CD14-positive monocyte (primary cell): ENCODE measurements at regions of chrX and their contacts with region 1.

Region 1: DNA sequence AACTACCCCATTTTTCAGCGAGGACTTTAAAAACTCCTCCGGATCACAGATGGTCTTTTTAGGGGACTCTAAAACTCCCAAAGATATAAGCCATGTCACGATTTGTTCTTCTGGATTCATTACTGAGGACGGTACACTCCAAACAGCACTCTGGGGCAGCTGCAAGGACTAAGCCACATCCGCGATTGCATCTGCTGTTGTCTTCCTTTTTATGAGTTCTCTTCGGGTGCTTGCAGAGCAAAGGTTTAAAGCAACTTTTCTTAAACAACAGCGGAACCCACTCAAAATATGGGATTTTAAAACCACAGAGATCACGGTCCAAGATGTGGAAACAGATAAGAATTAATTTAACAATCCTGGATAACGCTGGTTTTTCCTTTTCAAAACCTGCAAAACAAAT is at the start of gene ARHGEF6:
- DNase-seq: peak in 2 of 3 donors; percentile 14 to 21
- H3K4me3 ChIP-seq: peak within 1 kb of the TSS; percentile 43 to 88 (median 75)
- H3K4me3 Mint-ChIP-seq: peak within 1 kb of the TSS; percentile 78 to 94
- H3K27ac ChIP-seq: peak within 1 kb of the TSS; percentile 50 to 81
- H3K27ac Mint-ChIP-seq: peak within 1 kb of the TSS; percentile 80 to 95 (median 88)
- H3K4me1 ChIP-seq: peaks cover 45 to 59% of the 10 kb centered on the region in 2 donors
- H3K4me1 Mint-ChIP-seq: peaks cover 56% of the 10 kb centered on the region
- H3K27me3 ChIP-seq: no peaks in the 10 kb centered on the region
- H3K27me3 Mint-ChIP-seq: no peaks in the 10 kb centered on the region
- CTCF ChIP-seq: no peak
- polyA plus RNA-seq, gene ARHGEF6: 51.4 to 79.2 (median 57.0) TPM

Region 2: DNA sequence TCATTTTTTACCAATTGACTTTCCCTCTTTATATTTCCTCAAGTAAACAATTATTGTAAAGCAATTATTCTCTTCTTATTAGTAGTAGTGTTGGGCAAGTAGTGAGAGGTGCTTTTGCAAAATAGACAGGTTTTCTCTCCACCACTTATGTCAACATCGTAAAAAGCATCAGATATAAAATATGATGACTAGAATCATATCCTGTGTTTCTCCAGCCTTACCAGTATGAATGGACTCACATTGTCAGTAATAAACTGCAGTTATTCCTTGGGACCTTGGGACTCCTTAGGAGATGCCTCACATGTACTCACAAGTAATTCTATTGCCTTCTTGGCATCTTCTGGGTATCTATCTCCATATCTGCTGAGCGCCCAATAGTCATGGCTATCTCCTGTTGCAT is 333.5 kb before region 1 on chrX:
- intact Hi-C with region 1: no loop called
- DNase-seq: no peak
- H3K4me3 ChIP-seq: no peak overlapping the region
- H3K4me3 Mint-ChIP-seq: no peak overlapping the region
- H3K27ac ChIP-seq: no peak overlapping the region
- H3K27ac Mint-ChIP-seq: no peak overlapping the region
- H3K4me1 ChIP-seq: no peaks in the 10 kb centered on the region
- H3K4me1 Mint-ChIP-seq: no peaks in the 10 kb centered on the region
- H3K27me3 ChIP-seq: no peaks in the 10 kb centered on the region
- H3K27me3 Mint-ChIP-seq: no peaks in the 10 kb centered on the region
- CTCF ChIP-seq: no peak

Region 3: DNA sequence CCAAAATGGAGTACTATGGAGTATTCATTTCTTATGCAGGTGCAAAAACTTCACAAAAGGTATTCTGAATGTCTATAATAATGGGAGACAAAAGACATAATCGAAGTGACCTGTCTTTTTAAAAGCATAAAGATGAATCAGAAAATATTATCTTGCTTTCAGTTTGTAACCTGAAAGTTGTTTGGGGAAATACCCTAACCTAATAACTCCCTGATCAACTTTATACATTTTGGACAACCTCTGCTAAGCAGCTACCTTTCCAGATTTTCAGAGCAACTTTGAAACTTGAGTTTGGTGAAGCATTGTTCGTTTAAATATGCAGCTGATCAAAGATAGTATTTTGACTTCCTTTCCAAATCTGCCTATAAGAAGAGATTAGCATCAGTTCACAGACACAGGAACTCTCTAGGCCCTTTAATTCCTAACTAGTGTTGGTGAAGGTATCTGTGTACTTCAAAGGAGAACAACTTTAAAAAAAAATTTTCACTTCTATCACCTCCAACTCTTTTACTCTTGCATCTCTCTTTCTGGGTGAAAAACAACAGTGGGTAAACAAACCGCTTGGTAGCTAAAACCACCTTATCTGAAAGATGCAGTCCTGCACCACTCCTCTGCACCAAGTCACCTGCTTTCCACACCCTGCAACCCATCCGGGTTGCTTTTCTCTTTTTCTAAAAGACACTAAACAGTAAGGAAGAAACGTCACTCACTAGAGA is 106.3 kb before region 1 on chrX:
- intact Hi-C with region 1: no loop called
- DNase-seq: no peak
- H3K4me3 ChIP-seq: no peak overlapping the region
- H3K4me3 Mint-ChIP-seq: no peak overlapping the region
- H3K27ac ChIP-seq: no peak overlapping the region
- H3K27ac Mint-ChIP-seq: no peak overlapping the region
- H3K4me1 ChIP-seq: no peaks in the 10 kb centered on the region
- H3K4me1 Mint-ChIP-seq: no peaks in the 10 kb centered on the region
- H3K27me3 ChIP-seq: no peaks in the 10 kb centered on the region
- H3K27me3 Mint-ChIP-seq: no peaks in the 10 kb centered on the region
- CTCF ChIP-seq: no peak

Region 4: GRCh38 chrX:136725446-136726104 is 55.2 kb before region 1 on chrX:
- intact Hi-C with region 1: no loop called
- DNase-seq: no peak
- H3K4me3 ChIP-seq: no peak overlapping the region
- H3K4me3 Mint-ChIP-seq: no peak overlapping the region
- H3K27ac ChIP-seq: no peak overlapping the region
- H3K27ac Mint-ChIP-seq: no peak overlapping the region
- H3K4me1 ChIP-seq: peaks cover 0 to 4% of the 10 kb centered on the region in 2 donors
- H3K4me1 Mint-ChIP-seq: peaks cover 4% of the 10 kb centered on the region
- H3K27me3 ChIP-seq: no peaks in the 10 kb centered on the region
- H3K27me3 Mint-ChIP-seq: no peaks in the 10 kb centered on the region
- CTCF ChIP-seq: no peak

Region 5: DNA sequence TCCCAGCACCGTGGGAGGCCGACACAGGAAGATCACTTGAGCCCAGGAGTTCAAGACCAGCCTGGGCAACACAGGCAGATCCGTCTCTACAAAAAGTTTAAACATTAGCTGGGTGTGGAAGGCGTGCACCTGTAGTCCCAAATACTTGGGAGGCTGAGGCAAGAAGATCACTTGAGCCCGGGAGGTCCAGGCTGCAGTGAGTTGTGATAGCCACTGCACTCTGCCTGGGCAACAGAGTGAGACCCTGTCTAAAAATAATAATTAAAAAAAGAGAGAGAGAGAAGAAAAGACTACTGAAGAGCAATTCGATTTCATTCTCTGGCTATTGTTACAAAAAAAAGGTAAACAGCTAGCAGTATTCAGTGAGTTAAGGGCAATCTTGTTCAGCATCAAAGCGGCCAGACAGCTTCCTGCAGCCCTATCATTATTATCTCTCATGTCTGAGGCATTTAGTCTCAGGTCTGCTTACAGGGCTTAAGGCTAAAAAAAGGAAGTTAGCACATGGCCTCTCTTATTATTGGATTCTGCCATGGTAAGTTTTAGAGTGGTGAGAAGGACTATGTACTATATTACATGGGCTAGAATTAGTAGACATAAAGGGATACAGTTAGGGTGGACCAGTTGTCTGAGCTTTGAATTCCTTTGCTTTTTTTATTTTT is 37.9 kb before region 1 on chrX:
- intact Hi-C with region 1: loop called in 1 of 2 experiments (anchors 5 kb)
- DNase-seq: no peak
- H3K4me3 ChIP-seq: no peak overlapping the region
- H3K4me3 Mint-ChIP-seq: no peak overlapping the region
- H3K27ac ChIP-seq: no peak overlapping the region
- H3K27ac Mint-ChIP-seq: peak overlapping the region in 2 of 7 donors; percentile 42 to 62
- H3K4me1 ChIP-seq: peaks cover 35 to 42% of the 10 kb centered on the region in 2 donors
- H3K4me1 Mint-ChIP-seq: peaks cover 53% of the 10 kb centered on the region
- H3K27me3 ChIP-seq: no peaks in the 10 kb centered on the region
- H3K27me3 Mint-ChIP-seq: peaks cover 0 to 4% (median 0%) of the 10 kb centered on the region in 3 donors
- CTCF ChIP-seq: no peak

Region 6: GRCh38 chrX:137083969-137084368 is 303.2 kb after region 1 on chrX:
- intact Hi-C with region 1: no loop called
- DNase-seq: no peak
- H3K4me3 ChIP-seq: no peak overlapping the region
- H3K4me3 Mint-ChIP-seq: no peak overlapping the region
- H3K27ac ChIP-seq: no peak overlapping the region
- H3K27ac Mint-ChIP-seq: no peak overlapping the region
- H3K4me1 ChIP-seq: no peaks in the 10 kb centered on the region
- H3K4me1 Mint-ChIP-seq: no peaks in the 10 kb centered on the region
- H3K27me3 ChIP-seq: peaks cover 0 to 3% of the 10 kb centered on the region in 2 donors
- H3K27me3 Mint-ChIP-seq: peaks cover 2 to 3% (median 2%) of the 10 kb centered on the region in 3 donors
- CTCF ChIP-seq: no peak